ENCODE measurements at regions of chr5 and their contacts with region 1.

Region 1: GRCh38 chr5:61055434-61056006 is 106.7 kb downstream of the SMIM15 start:
- DNase-seq: no peak
- H3K4me3 ChIP-seq: no peak overlapping the region
- H3K27ac ChIP-seq: no peak overlapping the region
- H3K27me3 ChIP-seq: no peaks in the 10 kb centered on the region
- CTCF ChIP-seq: peak; percentile 81

Region 2: DNA sequence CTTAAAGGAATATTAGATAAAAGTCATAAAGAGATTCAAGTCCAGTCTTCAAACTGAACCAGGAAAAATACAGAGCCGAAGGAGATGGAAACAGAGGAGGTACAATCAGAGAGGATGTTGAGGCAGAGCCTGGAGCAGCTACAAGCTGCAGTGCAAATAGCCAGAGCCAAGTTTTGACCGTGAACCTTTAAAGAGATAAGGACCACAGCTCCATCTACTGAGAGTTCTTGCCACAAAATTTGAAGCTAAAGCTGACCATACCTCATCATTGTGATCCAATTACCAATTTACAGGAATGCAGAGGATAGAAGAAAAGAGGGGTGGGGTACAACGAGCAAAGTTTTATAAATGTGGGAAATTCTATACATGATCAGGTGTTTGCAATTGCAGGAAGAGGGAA is 345.1 kb before region 1 on chr5:
- CTCF ChIA-PET with region 1: no interaction called
- POLR2A ChIA-PET with region 1: no interaction called
- DNase-seq: no peak
- H3K4me3 ChIP-seq: no peak overlapping the region
- H3K27ac ChIP-seq: no peak overlapping the region
- H3K27me3 ChIP-seq: no peaks in the 10 kb centered on the region
- CTCF ChIP-seq: no peak

Region 3: GRCh38 chr5:60763061-60763460 is 292.5 kb before region 1 on chr5:
- CTCF ChIA-PET with region 1: no interaction called
- POLR2A ChIA-PET with region 1: no interaction called
- DNase-seq: no peak
- H3K4me3 ChIP-seq: no peak overlapping the region
- H3K27ac ChIP-seq: no peak overlapping the region
- H3K27me3 ChIP-seq: no peaks in the 10 kb centered on the region
- CTCF ChIP-seq: no peak

Region 4: GRCh38 chr5:61071526-61071925 is 16.0 kb after region 1 on chr5:
- CTCF ChIA-PET with region 1: interaction called, 11 read pairs
- POLR2A ChIA-PET with region 1: no interaction called
- DNase-seq: no peak
- H3K4me3 ChIP-seq: no peak overlapping the region
- H3K27ac ChIP-seq: no peak overlapping the region
- H3K27me3 ChIP-seq: no peaks in the 10 kb centered on the region
- CTCF ChIP-seq: no peak